ENCODE measurements at regions of chr11 and their contacts with region 1.

Region 1: DNA sequence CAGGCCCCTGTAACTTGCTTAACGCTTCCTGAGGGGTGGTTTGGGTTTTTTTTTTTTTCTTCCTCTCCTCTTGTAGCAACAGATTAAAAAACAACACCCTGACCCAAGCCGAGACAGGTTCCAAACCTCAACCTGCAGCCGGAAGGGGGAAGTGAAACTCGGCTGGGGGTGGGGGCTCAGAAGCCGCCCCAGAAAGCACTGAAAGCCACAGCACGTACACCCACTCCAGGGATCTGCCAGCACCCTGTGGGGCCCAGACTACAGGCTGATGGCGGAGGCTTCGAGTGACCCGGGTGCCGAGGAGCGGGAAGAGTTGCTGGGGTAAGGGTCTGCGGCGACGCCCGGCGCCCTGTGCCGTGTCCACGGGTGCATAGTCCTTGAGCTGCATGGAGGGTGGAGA is at the start of gene LSP1:
- DNase-seq: peak in 8 of 9 donors; percentile 78 to 89 (median 84)
- ATAC-seq: peak; percentile 69
- H3K4me3 ChIP-seq: peak within 1 kb of the TSS; percentile 94
- H3K4me3 Mint-ChIP-seq: peak within 1 kb of the TSS; percentile 91 to 100 (median 97)
- H3K27ac ChIP-seq: peak within 1 kb of the TSS; percentile 80
- H3K27ac Mint-ChIP-seq: peak within 1 kb of the TSS; percentile 94 to 99 (median 97)
- H3K4me1 ChIP-seq: peaks cover 58 to 66% of the 10 kb centered on the region in 2 donors
- H3K4me1 Mint-ChIP-seq: peaks cover 31 to 72% (median 48%) of the 10 kb centered on the region in 7 donors
- H3K27me3 ChIP-seq: no peaks in the 10 kb centered on the region
- H3K27me3 Mint-ChIP-seq: peaks cover 0 to 4% (median 0%) of the 10 kb centered on the region in 5 donors
- total RNA-seq, gene LSP1: 248 to 578 (median 289) TPM

Region 2: GRCh38 chr11:1785749-1786413 is 67.0 kb before region 1 on chr11:
- CTCF ChIA-PET with region 1: no interaction called
- POLR2A ChIA-PET with region 1: no interaction called
- intact Hi-C with region 1: no loop called
- DNase-seq: no peak
- ATAC-seq: peak; percentile 44
- H3K4me3 ChIP-seq: no peak overlapping the region
- H3K4me3 Mint-ChIP-seq: no peak overlapping the region
- H3K27ac ChIP-seq: no peak overlapping the region
- H3K27ac Mint-ChIP-seq: no peak overlapping the region
- H3K4me1 ChIP-seq: no peaks in the 10 kb centered on the region
- H3K4me1 Mint-ChIP-seq: peaks cover 0 to 14% (median 0%) of the 10 kb centered on the region in 7 donors
- H3K27me3 ChIP-seq: no peaks in the 10 kb centered on the region
- H3K27me3 Mint-ChIP-seq: peaks cover 0 to 5% (median 0%) of the 10 kb centered on the region in 5 donors

Region 3: GRCh38 chr11:1837171-1838076 is 15.5 kb before region 1 on chr11:
- CTCF ChIA-PET with region 1: interaction called, 8 read pairs
- POLR2A ChIA-PET with region 1: interaction called, 14 read pairs
- intact Hi-C with region 1: loop called (anchors 1 to 2 kb)
- DNase-seq: peak; percentile 53 to 83 (median 75)
- ATAC-seq: peak; percentile 84
- H3K4me3 ChIP-seq: no peak overlapping the region
- H3K4me3 Mint-ChIP-seq: peak overlapping the region in 1 of 10 donors; percentile 14
- H3K27ac ChIP-seq: no peak overlapping the region
- H3K27ac Mint-ChIP-seq: peak overlapping the region in 1 of 9 donors; percentile 19
- H3K4me1 ChIP-seq: peaks cover 0 to 7% of the 10 kb centered on the region in 2 donors
- H3K4me1 Mint-ChIP-seq: peaks cover 0 to 11% (median 7%) of the 10 kb centered on the region in 7 donors
- H3K27me3 ChIP-seq: no peaks in the 10 kb centered on the region
- H3K27me3 Mint-ChIP-seq: peaks cover 0 to 3% (median 0%) of the 10 kb centered on the region in 5 donors

Region 4: GRCh38 chr11:1877211-1878136 is 24.6 kb after region 1 on chr11:
- CTCF ChIA-PET with region 1: interaction called, 12 read pairs
- POLR2A ChIA-PET with region 1: interaction called, 37 read pairs
- intact Hi-C with region 1: loop called in 1 of 2 experiments (anchors 1 kb)
- DNase-seq: peak in 2 of 9 donors; percentile 4 to 11
- ATAC-seq: no peak
- H3K4me3 ChIP-seq: no peak overlapping the region
- H3K4me3 Mint-ChIP-seq: peak overlapping the region in 1 of 10 donors; percentile 30
- H3K27ac ChIP-seq: no peak overlapping the region
- H3K27ac Mint-ChIP-seq: peak overlapping the region in 4 of 9 donors; percentile 48 to 71 (median 52)
- H3K4me1 ChIP-seq: peaks cover 3 to 7% of the 10 kb centered on the region in 2 donors
- H3K4me1 Mint-ChIP-seq: peaks cover 10 to 48% (median 20%) of the 10 kb centered on the region in 7 donors
- H3K27me3 ChIP-seq: no peaks in the 10 kb centered on the region
- H3K27me3 Mint-ChIP-seq: no peaks in the 10 kb centered on the region

Region 5: DNA sequence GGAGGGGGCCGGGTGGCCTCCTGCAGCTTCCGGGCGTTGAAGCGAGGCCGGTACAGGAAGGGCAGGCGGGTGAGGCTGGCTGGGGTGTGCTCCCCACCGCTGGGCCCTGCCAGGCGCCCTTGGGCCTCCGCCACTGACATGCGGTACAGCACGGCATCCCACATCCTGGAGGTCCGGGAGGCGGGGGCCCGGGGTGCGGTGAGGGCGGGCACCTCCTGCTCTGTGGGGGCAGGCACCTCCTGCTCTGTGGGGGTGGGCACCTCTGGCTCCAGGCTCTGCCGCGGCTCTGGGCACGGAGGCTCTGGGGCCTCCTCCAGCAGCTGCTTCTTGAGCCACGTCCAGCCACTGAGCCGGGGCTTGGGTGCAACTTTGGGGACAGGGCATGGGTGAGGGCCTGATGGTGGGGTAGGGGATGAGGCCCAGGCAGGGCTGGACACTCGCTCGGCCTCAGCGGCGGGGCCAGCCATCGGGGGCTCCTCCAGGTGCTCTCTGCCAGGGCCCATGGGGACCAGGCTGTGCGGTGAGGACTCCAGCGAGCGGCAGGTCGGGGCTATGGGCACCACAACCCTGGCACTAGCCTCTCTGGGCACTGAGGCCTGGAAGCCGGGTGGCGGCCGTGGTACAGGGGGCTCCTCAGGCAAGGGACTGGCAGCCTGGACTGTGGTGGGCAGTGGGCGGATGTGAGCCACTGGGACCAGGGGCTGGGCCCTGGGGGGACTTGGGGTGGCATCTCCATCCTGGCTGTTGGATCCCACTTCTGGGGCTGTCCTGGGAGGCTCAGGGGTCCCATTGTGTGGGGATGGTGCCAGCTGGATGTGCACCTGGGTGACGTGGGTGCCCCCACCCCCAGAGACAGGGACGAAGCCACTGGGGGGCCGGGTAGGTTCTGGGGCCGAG is 36.6 kb after region 1 on chr11:
- CTCF ChIA-PET with region 1: interaction called, 4 read pairs
- POLR2A ChIA-PET with region 1: interaction called, 39 read pairs
- intact Hi-C with region 1: loop called (anchors 1 to 2 kb)
- DNase-seq: peak; percentile 58 to 87 (median 83)
- ATAC-seq: peak; percentile 90
- H3K4me3 ChIP-seq: peak overlapping the region; percentile 61
- H3K4me3 Mint-ChIP-seq: peak overlapping the region; percentile 68 to 91 (median 82)
- H3K27ac ChIP-seq: peak overlapping the region; percentile 73
- H3K27ac Mint-ChIP-seq: peak overlapping the region; percentile 65 to 91 (median 85)
- H3K4me1 ChIP-seq: peaks cover 33 to 34% of the 10 kb centered on the region in 2 donors
- H3K4me1 Mint-ChIP-seq: peaks cover 18 to 57% (median 41%) of the 10 kb centered on the region in 7 donors
- H3K27me3 ChIP-seq: no peaks in the 10 kb centered on the region
- H3K27me3 Mint-ChIP-seq: no peaks in the 10 kb centered on the region

Region 6: DNA sequence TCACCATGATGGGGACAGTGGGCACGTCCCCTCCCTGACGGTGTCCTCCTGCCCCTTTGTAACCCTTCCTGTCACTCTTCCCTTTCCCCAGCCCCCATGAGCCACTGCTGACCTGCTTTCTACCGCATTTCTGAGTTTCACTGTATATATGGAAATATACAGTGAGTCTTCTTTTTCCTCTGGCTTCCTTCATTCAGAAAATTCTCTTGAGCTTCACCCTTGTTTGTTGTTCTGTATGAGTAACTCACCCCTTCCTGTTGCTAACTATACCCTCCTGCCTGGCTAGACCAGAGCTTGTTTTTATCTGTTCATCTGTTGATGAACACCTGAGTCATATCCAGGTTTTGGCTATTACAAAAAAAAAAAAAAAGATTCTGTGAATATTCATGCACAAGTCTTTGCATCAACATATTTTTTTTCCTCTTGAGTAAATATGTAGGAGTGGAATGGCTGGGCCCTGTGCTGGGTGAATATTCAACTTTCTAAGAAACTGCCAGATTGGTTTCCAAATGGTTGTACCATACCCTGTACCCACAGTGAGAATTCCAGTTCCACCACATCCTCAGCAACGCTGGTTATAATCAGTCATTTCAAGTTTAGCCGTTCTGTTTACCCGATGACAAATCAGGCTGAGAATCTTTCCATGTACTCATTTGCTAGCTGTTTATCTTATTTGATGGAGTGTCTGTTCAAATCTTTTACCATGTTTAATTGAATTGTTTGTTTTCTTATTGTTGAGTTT is 224.4 kb after region 1 on chr11:
- CTCF ChIA-PET with region 1: no interaction called
- POLR2A ChIA-PET with region 1: no interaction called
- intact Hi-C with region 1: loop called in 1 of 2 experiments (anchors 1 kb)
- DNase-seq: peak in 1 of 9 donors; percentile 50
- ATAC-seq: no peak
- H3K4me3 ChIP-seq: no peak overlapping the region
- H3K4me3 Mint-ChIP-seq: peak overlapping the region in 1 of 10 donors; percentile 26
- H3K27ac ChIP-seq: no peak overlapping the region
- H3K27ac Mint-ChIP-seq: peak overlapping the region in 5 of 9 donors; percentile 9 to 87 (median 40)
- H3K4me1 ChIP-seq: no peaks in the 10 kb centered on the region
- H3K4me1 Mint-ChIP-seq: peaks cover 0 to 16% (median 5%) of the 10 kb centered on the region in 7 donors
- H3K27me3 ChIP-seq: no peaks in the 10 kb centered on the region
- H3K27me3 Mint-ChIP-seq: peaks cover 0 to 16% (median 11%) of the 10 kb centered on the region in 5 donors